Naive thymus-derived CD4-positive, alpha-beta T cell (primary cell): ENCODE measurements at regions of chrX and their contacts with region 1.

Region 1: DNA sequence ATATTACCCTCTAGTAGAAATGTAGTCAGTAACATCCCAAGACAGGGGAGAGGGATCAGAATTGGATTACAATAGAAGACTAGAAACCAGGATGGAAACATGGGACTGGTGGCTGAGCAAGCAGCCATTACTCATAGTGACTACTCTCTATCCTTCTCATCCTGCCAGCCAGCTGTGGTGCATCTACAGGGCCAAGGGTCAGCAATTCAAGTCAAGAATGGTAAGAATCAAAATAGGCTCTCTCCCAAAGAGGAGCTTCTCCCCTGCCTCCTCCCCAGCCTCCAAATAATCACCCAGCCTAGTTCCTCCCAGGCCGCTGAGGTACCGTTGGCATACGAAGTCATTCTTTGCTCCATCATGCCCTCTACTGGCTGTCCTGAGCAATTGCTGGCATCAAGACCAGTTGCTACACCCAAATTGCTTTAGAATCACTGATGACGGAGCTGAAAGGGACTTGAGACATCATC is 19.4 kb downstream of the AWAT2 start:
- DNase-seq: peak in 8 of 9 donors; percentile 7 to 53 (median 40)
- ATAC-seq: peak; percentile 80
- H3K4me3 ChIP-seq: no peak overlapping the region
- H3K4me3 Mint-ChIP-seq: peak overlapping the region in 1 of 10 donors; percentile 41
- H3K27ac ChIP-seq: no peak overlapping the region
- H3K27ac Mint-ChIP-seq: no peak overlapping the region
- H3K4me1 ChIP-seq: peaks cover 0 to 20% of the 10 kb centered on the region in 2 donors
- H3K4me1 Mint-ChIP-seq: peaks cover 11 to 40% (median 27%) of the 10 kb centered on the region in 7 donors
- H3K27me3 ChIP-seq: no peaks in the 10 kb centered on the region
- H3K27me3 Mint-ChIP-seq: no peaks in the 10 kb centered on the region

Region 2: GRCh38 chrX:69493193-69493592 is 537.1 kb before region 1 on chrX:
- CTCF ChIA-PET with region 1: no interaction called
- POLR2A ChIA-PET with region 1: no interaction called
- intact Hi-C with region 1: loop called (anchors 5 kb)
- DNase-seq: peak in 6 of 9 donors; percentile 16 to 30 (median 19)
- ATAC-seq: no peak
- H3K4me3 ChIP-seq: no peak overlapping the region
- H3K4me3 Mint-ChIP-seq: no peak overlapping the region
- H3K27ac ChIP-seq: no peak overlapping the region
- H3K27ac Mint-ChIP-seq: no peak overlapping the region
- H3K4me1 ChIP-seq: no peaks in the 10 kb centered on the region
- H3K4me1 Mint-ChIP-seq: no peaks in the 10 kb centered on the region
- H3K27me3 ChIP-seq: peaks cover 0 to 4% of the 10 kb centered on the region in 2 donors
- H3K27me3 Mint-ChIP-seq: peaks cover 2 to 24% (median 19%) of the 10 kb centered on the region in 5 donors

Region 3: DNA sequence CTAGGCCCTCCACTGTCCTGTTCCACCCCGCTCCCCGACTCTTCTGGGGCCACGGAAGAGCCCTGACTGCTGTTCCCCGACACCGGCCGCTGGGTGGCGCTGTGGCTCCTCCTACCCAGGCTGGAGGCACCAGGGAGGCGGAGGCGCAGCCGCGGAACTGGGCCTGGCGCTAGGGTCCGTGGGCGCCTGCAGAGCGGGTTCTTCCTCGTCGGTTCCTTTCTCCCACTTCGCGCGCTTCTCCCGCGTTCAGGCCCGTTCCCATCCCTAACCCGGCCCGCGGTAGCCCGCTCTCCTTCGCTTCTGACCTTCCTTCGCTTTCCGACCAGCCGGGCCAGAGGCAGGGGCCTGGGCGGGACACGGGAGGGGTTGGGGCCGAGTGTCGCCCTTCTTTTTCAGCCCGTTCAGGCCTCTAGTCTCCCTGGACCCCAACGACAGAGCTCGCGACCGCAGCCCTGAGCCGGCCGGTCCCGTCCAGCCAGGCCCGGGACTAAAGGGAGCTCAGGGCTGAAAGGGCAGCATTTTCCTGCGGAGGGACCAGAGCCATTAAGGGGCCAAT is 491.9 kb before region 1 on chrX:
- CTCF ChIA-PET with region 1: interaction called, 5 read pairs
- POLR2A ChIA-PET with region 1: no interaction called
- intact Hi-C with region 1: loop called (anchors 1 kb)
- DNase-seq: peak; percentile 30 to 79 (median 58)
- ATAC-seq: peak; percentile 90
- H3K4me3 ChIP-seq: no peak overlapping the region
- H3K4me3 Mint-ChIP-seq: peak overlapping the region in 8 of 10 donors; percentile 14 to 77 (median 61)
- H3K27ac ChIP-seq: no peak overlapping the region
- H3K27ac Mint-ChIP-seq: peak overlapping the region in 1 of 9 donors; percentile 34
- H3K4me1 ChIP-seq: peaks cover 3 to 10% of the 10 kb centered on the region in 2 donors
- H3K4me1 Mint-ChIP-seq: peaks cover 4 to 17% (median 11%) of the 10 kb centered on the region in 7 donors
- H3K27me3 ChIP-seq: no peaks in the 10 kb centered on the region
- H3K27me3 Mint-ChIP-seq: peaks cover 0 to 9% (median 6%) of the 10 kb centered on the region in 5 donors

Region 4: GRCh38 chrX:69615779-69616456 is 414.4 kb before region 1 on chrX and contains the start of gene EDA:
- CTCF ChIA-PET with region 1: interaction called, 3 read pairs
- POLR2A ChIA-PET with region 1: no interaction called
- intact Hi-C with region 1: loop called (anchors 1 to 10 kb)
- DNase-seq: peak; percentile 26 to 79 (median 51)
- ATAC-seq: peak; percentile 97
- H3K4me3 ChIP-seq: peak within 1 kb of the TSS; percentile 43
- H3K4me3 Mint-ChIP-seq: peak within 1 kb of the TSS; percentile 68 to 89 (median 84)
- H3K27ac ChIP-seq: peak within 1 kb of the TSS; percentile 14
- H3K27ac Mint-ChIP-seq: peak within 1 kb of the TSS in 1 of 9 donors; percentile 67
- H3K4me1 ChIP-seq: no peaks in the 10 kb centered on the region
- H3K4me1 Mint-ChIP-seq: peaks cover 3 to 25% (median 17%) of the 10 kb centered on the region in 7 donors
- H3K27me3 ChIP-seq: no peaks in the 10 kb centered on the region
- H3K27me3 Mint-ChIP-seq: peaks cover 0 to 19% (median 0%) of the 10 kb centered on the region in 5 donors
- total RNA-seq, gene EDA: 2.4 to 14.3 (median 3.2) TPM

Region 5: DNA sequence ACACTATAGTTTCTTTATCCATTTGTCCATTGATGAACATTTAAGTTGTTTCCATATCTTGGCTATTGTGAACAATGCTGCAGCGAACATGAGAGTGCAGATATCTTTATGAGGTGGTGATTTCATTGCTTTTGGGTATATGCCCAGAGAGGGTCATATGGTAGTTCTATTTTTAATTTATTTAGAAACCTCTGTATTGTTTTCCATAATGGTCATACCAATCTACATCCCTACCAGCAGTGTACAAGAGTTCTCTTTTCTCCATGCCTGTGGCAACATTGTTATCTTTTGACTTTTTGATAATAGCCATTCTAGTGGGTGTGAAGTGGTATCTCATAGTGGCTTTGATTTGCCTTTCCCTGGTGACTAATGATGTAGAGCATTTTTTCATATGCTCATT is 365.6 kb before region 1 on chrX:
- CTCF ChIA-PET with region 1: no interaction called
- POLR2A ChIA-PET with region 1: no interaction called
- intact Hi-C with region 1: no loop called
- DNase-seq: no peak
- ATAC-seq: no peak
- H3K4me3 ChIP-seq: no peak overlapping the region
- H3K4me3 Mint-ChIP-seq: no peak overlapping the region
- H3K27ac ChIP-seq: no peak overlapping the region
- H3K27ac Mint-ChIP-seq: no peak overlapping the region
- H3K4me1 ChIP-seq: no peaks in the 10 kb centered on the region
- H3K4me1 Mint-ChIP-seq: peaks cover 0 to 2% (median 0%) of the 10 kb centered on the region in 7 donors
- H3K27me3 ChIP-seq: no peaks in the 10 kb centered on the region
- H3K27me3 Mint-ChIP-seq: no peaks in the 10 kb centered on the region

Region 6: GRCh38 chrX:70013466-70014381 is 16.6 kb before region 1 on chrX:
- CTCF ChIA-PET with region 1: interaction called, 8 read pairs
- POLR2A ChIA-PET with region 1: no interaction called
- intact Hi-C with region 1: loop called in 1 of 2 experiments (anchors 2 kb)
- DNase-seq: no peak
- ATAC-seq: no peak
- H3K4me3 ChIP-seq: no peak overlapping the region
- H3K4me3 Mint-ChIP-seq: peak overlapping the region in 1 of 10 donors; percentile 2
- H3K27ac ChIP-seq: no peak overlapping the region
- H3K27ac Mint-ChIP-seq: peak overlapping the region in 3 of 9 donors; percentile 14 to 95 (median 57)
- H3K4me1 ChIP-seq: no peaks in the 10 kb centered on the region
- H3K4me1 Mint-ChIP-seq: peaks cover 7 to 33% (median 24%) of the 10 kb centered on the region in 7 donors
- H3K27me3 ChIP-seq: no peaks in the 10 kb centered on the region
- H3K27me3 Mint-ChIP-seq: peaks cover 0 to 2% (median 0%) of the 10 kb centered on the region in 5 donors

Region 7: GRCh38 chrX:70066646-70067045 is 36.3 kb after region 1 on chrX:
- CTCF ChIA-PET with region 1: no interaction called
- POLR2A ChIA-PET with region 1: no interaction called
- intact Hi-C with region 1: no loop called
- DNase-seq: no peak
- ATAC-seq: no peak
- H3K4me3 ChIP-seq: no peak overlapping the region
- H3K4me3 Mint-ChIP-seq: no peak overlapping the region
- H3K27ac ChIP-seq: no peak overlapping the region
- H3K27ac Mint-ChIP-seq: no peak overlapping the region
- H3K4me1 ChIP-seq: no peaks in the 10 kb centered on the region
- H3K4me1 Mint-ChIP-seq: peaks cover 0 to 3% (median 0%) of the 10 kb centered on the region in 7 donors
- H3K27me3 ChIP-seq: no peaks in the 10 kb centered on the region
- H3K27me3 Mint-ChIP-seq: no peaks in the 10 kb centered on the region

Region 8: GRCh38 chrX:70096052-70096451 is 65.7 kb after region 1 on chrX:
- CTCF ChIA-PET with region 1: no interaction called
- POLR2A ChIA-PET with region 1: no interaction called
- intact Hi-C with region 1: loop called (anchors 2 to 5 kb)
- DNase-seq: no peak
- ATAC-seq: no peak
- H3K4me3 ChIP-seq: no peak overlapping the region
- H3K4me3 Mint-ChIP-seq: no peak overlapping the region
- H3K27ac ChIP-seq: no peak overlapping the region
- H3K27ac Mint-ChIP-seq: no peak overlapping the region
- H3K4me1 ChIP-seq: no peaks in the 10 kb centered on the region
- H3K4me1 Mint-ChIP-seq: peaks cover 0 to 3% (median 0%) of the 10 kb centered on the region in 7 donors
- H3K27me3 ChIP-seq: no peaks in the 10 kb centered on the region
- H3K27me3 Mint-ChIP-seq: peaks cover 3 to 8% (median 7%) of the 10 kb centered on the region in 5 donors

Region 9: DNA sequence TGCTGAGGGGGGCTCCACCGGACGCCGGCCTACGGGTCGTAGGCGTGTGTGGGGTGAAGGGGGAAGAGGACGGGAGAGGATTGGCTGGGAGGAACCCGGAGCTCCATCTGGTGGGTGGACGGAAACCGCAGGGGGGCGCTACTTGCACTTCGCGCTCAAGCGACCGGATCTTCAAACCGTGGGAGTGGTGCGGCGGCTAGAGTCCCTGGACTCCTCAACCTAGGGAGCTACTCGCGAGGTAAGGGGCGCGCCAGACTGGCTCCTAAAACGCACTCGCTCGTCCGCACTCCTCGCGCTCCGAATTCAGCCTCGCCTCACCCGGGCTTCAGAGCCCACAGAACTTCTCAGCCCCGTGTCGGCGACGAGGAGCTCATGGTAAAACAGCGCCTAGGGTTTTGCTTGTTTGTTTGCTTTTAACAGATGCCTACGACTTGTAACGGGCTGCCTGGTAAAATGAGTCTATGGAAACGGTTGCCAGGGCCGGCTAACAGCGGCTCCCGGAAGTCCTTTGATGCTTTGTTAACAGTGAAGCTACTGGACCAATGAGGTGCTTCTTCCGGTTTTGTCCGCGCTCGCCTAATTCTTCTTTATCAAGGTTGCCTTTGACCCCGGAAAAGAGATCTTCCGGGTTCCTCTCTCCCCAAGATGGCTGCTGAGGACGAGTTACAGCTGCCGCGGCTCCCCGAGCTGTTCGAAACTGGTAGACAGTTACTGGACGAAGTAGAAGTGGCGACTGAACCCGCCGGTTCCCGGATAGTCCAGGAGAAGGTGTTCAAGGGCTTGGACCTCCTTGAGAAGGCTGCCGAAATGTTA is 103.2 kb after region 1 on chrX and contains the start of gene IGBP1:
- CTCF ChIA-PET with region 1: interaction called, 3 read pairs
- POLR2A ChIA-PET with region 1: no interaction called
- intact Hi-C with region 1: loop called (anchors 1 to 2 kb)
- DNase-seq: peak; percentile 40 to 90 (median 82)
- ATAC-seq: peak; percentile 90
- H3K4me3 ChIP-seq: peak within 1 kb of the TSS; percentile 94
- H3K4me3 Mint-ChIP-seq: peak within 1 kb of the TSS; percentile 95 to 99 (median 99)
- H3K27ac ChIP-seq: peak within 1 kb of the TSS; percentile 82
- H3K27ac Mint-ChIP-seq: peak within 1 kb of the TSS; percentile 91 to 99 (median 97)
- H3K4me1 ChIP-seq: peaks cover 16 to 18% of the 10 kb centered on the region in 2 donors
- H3K4me1 Mint-ChIP-seq: peaks cover 14 to 47% (median 29%) of the 10 kb centered on the region in 7 donors
- H3K27me3 ChIP-seq: no peaks in the 10 kb centered on the region
- H3K27me3 Mint-ChIP-seq: no peaks in the 10 kb centered on the region
- total RNA-seq, gene IGBP1: 46.7 to 70.1 (median 58.9) TPM